ENCODE measurements at regions of chr3 and their contacts with region 1.

Region 1: GRCh38 chr3:73508330-73508954 is 116.3 kb downstream of the PDZRN3 start:
- DNase-seq: no peak
- H3K4me3 ChIP-seq: no peak overlapping the region
- H3K27ac ChIP-seq: no peak overlapping the region
- H3K4me1 ChIP-seq: peaks cover 6 to 12% (median 11%) of the 10 kb centered on the region in 4 experiments
- H3K27me3 ChIP-seq: peaks cover 0 to 5% (median 0%) of the 10 kb centered on the region in 4 experiments; a peak in 3 of 7 replicates
- CTCF ChIP-seq: peak; percentile 65 to 83 (median 66)
- EP300 ChIP-seq: no peak
- POLR2A ChIP-seq: no peak
- RAD21 ChIP-seq: peak; percentile 67 to 73

Region 2: DNA sequence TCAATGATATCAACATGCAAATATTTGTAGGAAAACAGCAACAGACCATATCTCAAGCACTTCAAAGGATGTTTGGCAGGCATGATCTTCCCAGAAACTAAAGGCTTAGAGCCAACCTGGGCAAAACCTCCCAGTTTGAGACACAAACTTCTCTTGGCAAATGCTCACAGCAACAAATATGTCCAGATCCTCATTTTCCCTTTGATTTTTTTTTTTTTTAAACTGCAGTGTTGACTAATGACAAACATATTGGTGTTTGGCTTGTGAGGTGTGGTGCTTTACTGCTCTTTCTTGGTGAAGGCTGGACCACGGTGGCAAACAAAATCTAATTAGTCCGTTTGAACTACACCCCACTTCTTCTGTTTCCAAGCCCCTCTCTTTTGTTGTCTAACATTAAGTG is 359.8 kb before region 1 on chr3:
- CTCF ChIA-PET with region 1: no interaction called
- POLR2A ChIA-PET with region 1: no interaction called
- DNase-seq: no peak
- H3K4me3 ChIP-seq: no peak overlapping the region
- H3K27ac ChIP-seq: no peak overlapping the region
- H3K4me1 ChIP-seq: no peaks in the 10 kb centered on the region
- H3K27me3 ChIP-seq: no peaks in the 10 kb centered on the region
- CTCF ChIP-seq: no peak
- EP300 ChIP-seq: no peak
- POLR2A ChIP-seq: no peak
- RAD21 ChIP-seq: no peak

Region 3: GRCh38 chr3:73547427-73548248 is 39.2 kb after region 1 on chr3:
- CTCF ChIA-PET with region 1: interaction called, 10 read pairs
- POLR2A ChIA-PET with region 1: no interaction called
- DNase-seq: no peak
- H3K4me3 ChIP-seq: no peak overlapping the region
- H3K27ac ChIP-seq: no peak overlapping the region
- H3K4me1 ChIP-seq: peaks cover 0 to 6% (median 3%) of the 10 kb centered on the region in 4 experiments; a peak in 5 of 7 replicates
- H3K27me3 ChIP-seq: no peaks in the 10 kb centered on the region
- CTCF ChIP-seq: no peak
- EP300 ChIP-seq: no peak
- POLR2A ChIP-seq: no peak
- RAD21 ChIP-seq: no peak

Region 4: DNA sequence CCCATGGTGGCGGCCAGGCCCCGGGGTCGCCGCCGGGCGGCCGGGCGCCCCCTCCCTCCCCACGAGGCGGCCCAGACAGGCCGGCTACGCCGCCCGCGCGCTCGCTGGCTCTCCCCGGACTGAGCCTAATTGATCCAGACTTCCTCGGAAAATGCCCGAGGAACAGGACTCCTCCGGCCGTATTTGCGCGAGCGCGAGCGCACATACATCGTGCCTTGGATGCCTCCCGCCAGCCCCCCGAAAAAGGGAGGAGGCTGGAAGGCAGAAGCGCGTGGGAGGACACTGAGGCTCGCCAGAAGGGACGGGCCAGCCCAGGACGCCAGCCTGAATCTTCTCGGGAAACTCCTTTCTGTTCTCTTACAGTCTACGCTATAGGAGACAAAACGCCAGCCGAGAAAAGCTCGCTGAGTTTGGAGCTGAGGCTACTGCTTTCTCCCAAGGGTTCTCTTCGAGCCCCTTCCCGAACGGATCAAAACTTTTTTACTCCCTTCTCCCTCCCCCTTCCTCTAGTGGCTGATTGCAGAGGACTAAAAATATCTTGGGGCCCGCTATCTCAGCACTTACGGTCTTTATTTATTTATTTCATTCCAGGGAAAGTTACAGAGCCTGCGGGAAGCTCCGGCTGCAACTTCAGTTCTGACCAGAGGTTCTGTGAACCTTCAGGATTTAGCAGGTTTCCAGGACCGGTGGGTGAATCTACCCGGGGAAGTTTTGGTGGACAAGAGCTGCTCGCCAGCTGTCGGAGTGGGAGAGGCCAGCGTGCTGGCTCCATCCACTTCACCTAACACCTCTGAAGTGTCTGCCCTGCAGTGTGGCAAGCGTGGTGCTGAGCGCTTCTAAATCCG is 116.6 kb after region 1 on chr3 and contains the start of gene PDZRN3:
- CTCF ChIA-PET with region 1: interaction called, 13 read pairs
- POLR2A ChIA-PET with region 1: no interaction called
- DNase-seq: peak; percentile 34 to 86
- H3K4me3 ChIP-seq: peak within 1 kb of the TSS; percentile 66 to 79 (median 69)
- H3K27ac ChIP-seq: no peak within 1 kb of the TSS
- H3K4me1 ChIP-seq: peaks cover 8 to 25% (median 9%) of the 10 kb centered on the region in 4 experiments
- H3K27me3 ChIP-seq: peaks cover 0 to 18% (median 9%) of the 10 kb centered on the region in 4 experiments; a peak in 5 of 7 replicates
- CTCF ChIP-seq: no peak
- EP300 ChIP-seq: no peak
- POLR2A ChIP-seq: peak in 1 of 2 experiments; percentile 66; a peak in 2 of 3 replicates
- RAD21 ChIP-seq: no peak
- total RNA-seq, gene PDZRN3: 16.8 and 20.5 TPM in 2 replicates

Region 5: GRCh38 chr3:73661265-73661664 is 152.8 kb after region 1 on chr3:
- CTCF ChIA-PET with region 1: no interaction called
- POLR2A ChIA-PET with region 1: no interaction called
- DNase-seq: no peak
- H3K4me3 ChIP-seq: no peak overlapping the region
- H3K27ac ChIP-seq: no peak overlapping the region
- H3K4me1 ChIP-seq: peaks cover 0 to 7% (median 4%) of the 10 kb centered on the region in 4 experiments; a peak in 3 of 7 replicates
- H3K27me3 ChIP-seq: no peaks in the 10 kb centered on the region; a peak in 3 of 7 replicates
- CTCF ChIP-seq: no peak
- EP300 ChIP-seq: no peak
- POLR2A ChIP-seq: no peak
- RAD21 ChIP-seq: no peak

Region 6: GRCh38 chr3:73694983-73695757 is 186.7 kb after region 1 on chr3:
- CTCF ChIA-PET with region 1: no interaction called
- POLR2A ChIA-PET with region 1: no interaction called
- DNase-seq: no peak
- H3K4me3 ChIP-seq: no peak overlapping the region
- H3K27ac ChIP-seq: no peak overlapping the region
- H3K4me1 ChIP-seq: no peaks in the 10 kb centered on the region
- H3K27me3 ChIP-seq: no peaks in the 10 kb centered on the region
- CTCF ChIP-seq: no peak
- EP300 ChIP-seq: no peak
- POLR2A ChIP-seq: no peak
- RAD21 ChIP-seq: no peak

Region 7: DNA sequence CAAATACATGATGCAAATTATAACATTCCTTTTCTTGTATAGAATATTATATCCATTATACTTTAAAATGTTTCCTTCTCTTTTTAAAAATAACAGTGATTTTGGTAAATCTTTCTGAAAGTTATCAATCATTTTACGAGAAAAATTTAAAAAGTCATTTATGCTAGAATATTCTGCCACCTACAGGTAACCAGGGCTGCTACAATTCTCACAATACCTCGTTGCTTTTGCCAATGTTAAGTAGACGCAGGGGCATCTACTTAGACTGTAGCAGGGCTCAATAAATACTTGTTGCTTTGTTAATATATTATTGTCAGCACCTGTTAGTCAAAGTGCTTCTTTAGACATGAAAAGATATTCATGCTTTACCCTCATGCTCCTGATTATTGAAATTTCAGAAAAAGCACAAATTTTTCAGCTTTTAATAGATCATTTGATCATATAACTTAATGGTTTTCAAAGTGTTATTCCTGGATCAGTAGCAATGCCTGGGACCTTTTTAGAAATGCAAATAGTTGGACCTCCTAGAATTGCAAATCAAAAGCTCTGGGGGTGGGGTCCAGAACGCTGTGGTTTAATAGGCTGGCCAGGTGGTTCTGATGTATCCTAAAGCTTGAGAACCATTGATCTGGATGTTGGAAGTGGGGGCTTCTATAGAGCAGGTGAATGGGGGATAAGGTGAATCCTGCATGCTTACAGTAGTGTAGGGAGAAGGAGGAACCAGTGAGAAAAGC is 339.9 kb after region 1 on chr3:
- CTCF ChIA-PET with region 1: interaction called, 13 read pairs
- POLR2A ChIA-PET with region 1: no interaction called
- DNase-seq: no peak
- H3K4me3 ChIP-seq: no peak overlapping the region
- H3K27ac ChIP-seq: no peak overlapping the region
- H3K4me1 ChIP-seq: peaks cover 0 to 4% (median 0%) of the 10 kb centered on the region in 4 experiments; a peak in 1 of 7 replicates
- H3K27me3 ChIP-seq: no peaks in the 10 kb centered on the region
- CTCF ChIP-seq: peak in 2 of 3 experiments; percentile 36 to 56; a peak in 2 of 4 replicates
- EP300 ChIP-seq: no peak
- POLR2A ChIP-seq: no peak
- RAD21 ChIP-seq: peak; percentile 65 to 67